K562 (cell line): ENCODE measurements at regions of chr1 and their contacts with region 1.

Region 1: GRCh38 chr1:28756846-28757245 is 20.1 kb downstream of the YTHDF2 start:
- DNase-seq: no peak
- ATAC-seq: peak; percentile 59
- H3K4me3 ChIP-seq: no peak overlapping the region
- H3K27ac ChIP-seq: no peak overlapping the region
- H3K4me1 ChIP-seq: peaks cover 5 to 12% of the 10 kb centered on the region in 2 experiments; a peak in 3 of 5 replicates
- H3K27me3 ChIP-seq: no peaks in the 10 kb centered on the region
- CTCF ChIP-seq: peak; percentile 24 to 51 (median 36); a peak in 4 of 6 replicates
- EP300 ChIP-seq: no peak
- POLR2A ChIP-seq: no peak
- RAD21 ChIP-seq: peak in 1 of 2 experiments; percentile 37; a peak in 1 of 4 replicates

Region 2: DNA sequence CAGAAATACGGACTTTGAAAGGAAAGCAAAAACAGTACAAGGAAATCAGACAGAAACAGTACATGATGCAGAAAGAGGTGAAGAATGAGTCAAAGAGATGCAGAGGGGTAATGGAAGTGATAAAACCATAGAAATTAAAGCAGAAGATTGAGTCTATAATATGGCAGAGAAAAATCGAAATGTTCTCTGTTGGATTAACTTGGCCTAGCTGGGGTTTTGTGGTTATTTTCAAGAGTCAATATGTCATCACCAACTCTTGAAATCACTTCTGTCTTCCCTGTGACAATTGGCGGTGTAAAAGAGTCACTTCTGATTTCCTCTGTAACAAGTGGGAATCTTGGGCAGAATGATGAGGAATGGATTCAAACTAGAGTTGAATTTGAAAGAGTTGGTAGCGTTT is 12.7 kb before region 1 on chr1:
- CTCF ChIA-PET with region 1: interaction called, 3 read pairs
- POLR2A ChIA-PET with region 1: interaction called, 13 read pairs
- in situ Hi-C with region 1: no loop called
- intact Hi-C with region 1: no loop called
- DNase-seq: no peak
- ATAC-seq: no peak
- H3K4me3 ChIP-seq: peak overlapping the region; percentile 1; the same call in 1 of the 2 replicates
- H3K27ac ChIP-seq: no peak overlapping the region
- H3K4me1 ChIP-seq: peaks cover 24 to 29% of the 10 kb centered on the region in 2 experiments
- H3K27me3 ChIP-seq: no peaks in the 10 kb centered on the region
- CTCF ChIP-seq: no peak
- EP300 ChIP-seq: no peak
- POLR2A ChIP-seq: peak; percentile 34; the same call in 1 of the 2 replicates
- RAD21 ChIP-seq: no peak

Region 3: GRCh38 chr1:29271724-29272123 is 514.9 kb after region 1 on chr1:
- CTCF ChIA-PET with region 1: no interaction called
- POLR2A ChIA-PET with region 1: no interaction called
- in situ Hi-C with region 1: no loop called
- intact Hi-C with region 1: no loop called
- DNase-seq: no peak
- ATAC-seq: peak; percentile 36; the same call in 1 of the 3 replicates
- H3K4me3 ChIP-seq: no peak overlapping the region
- H3K27ac ChIP-seq: no peak overlapping the region
- H3K4me1 ChIP-seq: no peaks in the 10 kb centered on the region
- H3K27me3 ChIP-seq: peaks cover 48 to 49% of the 10 kb centered on the region in 2 experiments
- CTCF ChIP-seq: no peak
- EP300 ChIP-seq: no peak
- POLR2A ChIP-seq: no peak
- RAD21 ChIP-seq: no peak